Activated naive CD4-positive, alpha-beta T cell treated with anti-CD3 and anti-CD28 coated beads, Interleukin-2, amount 10 ng/mL, durations not matched to agents 7 days and 5 days (primary cell): ENCODE measurements at regions of chr6 and their contacts with region 1.

Region 1: GRCh38 chr6:53725791-53726431 is 60.4 kb upstream of the KLHL31 start:
- DNase-seq: peak; percentile 80
- H3K4me3 Mint-ChIP-seq: no peak overlapping the region
- H3K27ac Mint-ChIP-seq: no peak overlapping the region
- H3K4me1 Mint-ChIP-seq: peaks cover 9% of the 10 kb centered on the region
- H3K27me3 Mint-ChIP-seq: peaks cover 48% of the 10 kb centered on the region

Region 2: DNA sequence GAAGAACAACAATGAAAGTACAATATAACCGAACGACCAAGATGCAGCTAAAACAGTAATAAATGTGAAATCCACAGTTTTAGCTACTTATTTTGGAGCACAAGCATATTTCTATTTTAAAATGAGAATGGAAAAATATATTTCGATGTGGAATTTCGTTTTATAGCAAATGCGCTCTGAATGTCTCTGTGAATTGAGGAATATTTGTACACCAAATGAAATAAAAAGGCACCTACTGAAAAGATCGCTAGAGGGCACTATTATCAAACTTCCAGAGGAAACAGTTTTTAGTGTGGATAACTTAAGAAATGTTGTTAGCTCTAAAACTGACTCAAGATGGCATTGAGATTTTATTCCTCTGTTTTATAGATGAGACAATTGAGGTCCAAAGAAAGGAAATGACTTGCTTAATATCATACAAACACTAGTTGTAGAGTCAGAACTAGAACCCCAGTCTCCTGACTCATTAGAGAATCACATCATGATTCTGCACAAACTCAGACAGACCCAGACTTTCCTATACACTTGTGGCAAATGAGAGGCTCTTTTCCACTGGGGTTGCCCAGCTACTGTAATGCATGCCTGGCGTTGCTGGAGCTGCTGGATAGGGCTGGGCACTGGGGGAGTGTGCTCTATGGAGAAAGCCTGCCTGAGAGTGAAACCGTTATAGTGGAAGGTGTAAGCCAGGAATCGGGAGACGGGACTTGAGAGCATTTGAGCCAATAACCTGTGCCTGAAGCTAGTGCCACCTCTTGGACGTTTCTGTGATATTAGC is 232.9 kb before region 1 on chr6:
- CTCF ChIA-PET with region 1: interaction called, 134 read pairs
- DNase-seq: no peak
- H3K4me3 Mint-ChIP-seq: no peak overlapping the region
- H3K27ac Mint-ChIP-seq: no peak overlapping the region
- H3K4me1 Mint-ChIP-seq: peaks cover 2% of the 10 kb centered on the region
- H3K27me3 Mint-ChIP-seq: peaks cover 16% of the 10 kb centered on the region

Region 3: GRCh38 chr6:53623497-53623896 is 102.4 kb before region 1 on chr6:
- CTCF ChIA-PET with region 1: no interaction called
- DNase-seq: no peak
- H3K4me3 Mint-ChIP-seq: no peak overlapping the region
- H3K27ac Mint-ChIP-seq: no peak overlapping the region
- H3K4me1 Mint-ChIP-seq: no peaks in the 10 kb centered on the region
- H3K27me3 Mint-ChIP-seq: peaks cover 23% of the 10 kb centered on the region

Region 4: GRCh38 chr6:53651764-53652401 is 74.0 kb before region 1 on chr6:
- CTCF ChIA-PET with region 1: interaction called, 11 read pairs
- DNase-seq: peak; percentile 86
- H3K4me3 Mint-ChIP-seq: peak overlapping the region; percentile 86
- H3K27ac Mint-ChIP-seq: peak overlapping the region; percentile 90
- H3K4me1 Mint-ChIP-seq: peaks cover 35% of the 10 kb centered on the region
- H3K27me3 Mint-ChIP-seq: peaks cover 20% of the 10 kb centered on the region

Region 5: DNA sequence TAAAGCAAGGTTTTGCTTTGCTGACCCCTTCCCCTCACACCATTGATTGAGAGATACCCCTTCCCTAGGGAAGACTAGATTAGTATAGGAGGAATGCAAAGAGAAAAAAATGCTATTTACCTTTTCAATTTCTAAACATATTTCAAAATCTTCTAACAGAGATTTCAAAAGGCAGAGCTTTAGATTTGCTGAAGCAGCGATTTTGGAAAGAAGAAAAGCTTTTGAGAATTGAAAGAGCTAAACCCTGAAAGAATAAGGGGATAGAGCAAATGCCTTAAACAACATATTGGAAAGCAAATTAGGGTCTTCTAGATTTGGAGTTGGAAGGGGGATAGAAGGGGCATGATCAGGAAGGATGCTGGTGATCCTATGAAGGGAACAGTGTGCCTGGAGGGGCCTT is 13.8 kb before region 1 on chr6:
- CTCF ChIA-PET with region 1: interaction called, 54 read pairs
- DNase-seq: no peak
- H3K4me3 Mint-ChIP-seq: no peak overlapping the region
- H3K27ac Mint-ChIP-seq: no peak overlapping the region
- H3K4me1 Mint-ChIP-seq: no peaks in the 10 kb centered on the region
- H3K27me3 Mint-ChIP-seq: peaks cover 33% of the 10 kb centered on the region

Region 6: GRCh38 chr6:53741034-53741823 is 15.3 kb after region 1 on chr6:
- CTCF ChIA-PET with region 1: interaction called, 15 read pairs
- DNase-seq: peak; percentile 45
- H3K4me3 Mint-ChIP-seq: no peak overlapping the region
- H3K27ac Mint-ChIP-seq: peak overlapping the region; percentile 8
- H3K4me1 Mint-ChIP-seq: peaks cover 13% of the 10 kb centered on the region
- H3K27me3 Mint-ChIP-seq: no peaks in the 10 kb centered on the region

Region 7: DNA sequence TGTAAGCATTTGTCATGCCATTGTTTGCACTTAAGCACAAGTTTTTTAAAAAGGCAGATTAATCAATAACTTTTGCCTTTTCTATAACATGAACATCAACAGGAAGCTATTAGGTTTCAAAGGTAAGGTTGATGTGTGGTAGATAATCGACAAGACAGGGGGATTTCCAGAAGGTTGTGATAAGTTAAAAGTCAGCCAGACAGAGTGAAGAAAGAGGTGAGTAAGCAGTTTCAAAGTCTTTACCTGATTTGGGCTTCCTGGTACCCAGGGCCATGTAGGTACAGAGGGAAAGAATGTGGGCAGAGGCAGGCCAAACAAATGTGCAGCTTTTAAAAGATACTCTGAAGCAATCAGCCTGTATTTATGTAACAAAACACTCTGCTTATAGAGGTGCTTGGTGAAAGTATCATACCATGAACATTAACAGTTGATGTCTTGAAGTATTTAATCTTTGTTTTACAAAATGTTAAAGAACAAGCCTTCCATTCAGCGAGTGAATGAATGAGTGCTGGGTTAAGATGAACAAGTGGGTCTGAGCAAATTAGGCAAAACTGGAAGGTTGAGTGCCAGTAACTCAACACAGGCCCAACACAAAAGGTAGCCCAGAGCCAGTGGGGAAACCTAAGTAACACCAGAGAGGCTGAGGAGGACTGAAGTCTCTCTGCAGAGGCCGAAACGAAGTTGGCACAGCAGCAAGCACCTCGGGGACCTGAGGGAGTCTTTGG is 129.1 kb after region 1 on chr6:
- CTCF ChIA-PET with region 1: no interaction called
- DNase-seq: no peak
- H3K4me3 Mint-ChIP-seq: no peak overlapping the region
- H3K27ac Mint-ChIP-seq: no peak overlapping the region
- H3K4me1 Mint-ChIP-seq: peaks cover 9% of the 10 kb centered on the region
- H3K27me3 Mint-ChIP-seq: no peaks in the 10 kb centered on the region

Region 8: GRCh38 chr6:53956068-53956711 is 230.3 kb after region 1 on chr6:
- CTCF ChIA-PET with region 1: interaction called, 14 read pairs
- DNase-seq: no peak
- H3K4me3 Mint-ChIP-seq: no peak overlapping the region
- H3K27ac Mint-ChIP-seq: no peak overlapping the region
- H3K4me1 Mint-ChIP-seq: no peaks in the 10 kb centered on the region
- H3K27me3 Mint-ChIP-seq: peaks cover 5% of the 10 kb centered on the region